HEK293T (cell line): ENCODE measurements at regions of chr11 and their contacts with region 1.

Region 1: DNA sequence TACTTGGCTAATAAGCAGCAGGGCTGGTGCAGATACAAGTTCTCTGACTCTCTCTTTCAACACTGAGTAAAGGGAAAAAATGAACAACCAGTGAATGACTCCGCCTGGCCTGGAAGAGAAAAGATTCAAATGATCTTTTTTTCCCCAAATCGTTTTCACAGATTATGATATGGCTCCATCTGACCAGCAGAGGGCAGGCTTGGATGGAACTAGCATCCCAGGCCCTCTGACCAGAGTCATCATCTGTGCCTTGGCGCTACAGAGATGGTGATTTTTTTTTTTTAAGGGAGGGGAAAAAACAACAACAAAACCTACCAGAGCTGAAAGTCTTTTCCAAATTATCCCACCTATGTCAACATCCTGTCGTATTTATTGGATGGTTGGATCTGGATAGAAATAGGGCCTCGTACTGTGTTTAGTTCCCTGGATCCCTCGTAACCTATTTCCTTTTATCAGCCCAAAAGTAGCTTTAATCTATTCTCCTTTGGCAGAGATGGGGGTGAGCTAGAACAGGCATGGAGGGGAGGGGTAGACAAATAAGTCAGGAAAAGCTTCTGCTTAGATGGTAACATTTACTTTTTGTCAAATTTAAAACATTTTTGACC is 69.7 kb downstream of the PRSS23 start:
- DNase-seq: peak; percentile 79

Region 2: DNA sequence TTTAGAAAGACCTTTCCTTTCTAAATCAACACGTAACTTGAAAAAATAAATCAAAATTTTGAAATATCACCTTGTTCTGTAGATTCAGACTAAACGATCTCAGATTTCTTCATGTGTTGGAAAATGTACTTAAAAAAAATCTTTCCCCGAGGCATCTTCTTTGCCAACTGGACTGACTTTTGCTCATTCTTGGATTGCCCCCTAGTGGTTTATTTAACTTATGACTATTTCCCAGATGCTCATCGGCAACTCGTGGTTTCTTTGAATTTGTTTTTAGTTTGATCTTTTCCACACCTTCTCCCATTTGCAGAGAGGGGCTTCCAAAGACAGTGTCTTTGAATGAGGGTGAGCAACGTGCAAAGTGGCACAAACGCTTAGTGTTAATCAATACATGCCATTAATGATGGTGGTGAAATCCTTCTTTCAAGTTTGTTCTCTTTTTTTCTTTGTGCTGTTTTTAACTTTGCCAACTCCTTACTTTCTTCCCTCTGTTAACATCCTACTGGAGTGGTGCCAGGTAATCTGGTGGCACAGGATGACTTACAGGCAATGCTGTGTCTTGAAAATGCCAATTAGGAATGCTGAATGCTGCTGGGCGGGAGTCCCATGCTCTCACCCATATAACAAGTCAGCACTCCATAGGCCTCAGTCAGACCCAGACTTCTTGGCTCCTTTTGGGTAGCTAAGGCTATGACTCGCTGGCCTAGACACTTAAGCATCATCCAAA is 51.4 kb before region 1 on chr11:
- CTCF ChIA-PET with region 1: no interaction called
- POLR2A ChIA-PET with region 1: no interaction called
- DNase-seq: peak; percentile 62

Region 3: DNA sequence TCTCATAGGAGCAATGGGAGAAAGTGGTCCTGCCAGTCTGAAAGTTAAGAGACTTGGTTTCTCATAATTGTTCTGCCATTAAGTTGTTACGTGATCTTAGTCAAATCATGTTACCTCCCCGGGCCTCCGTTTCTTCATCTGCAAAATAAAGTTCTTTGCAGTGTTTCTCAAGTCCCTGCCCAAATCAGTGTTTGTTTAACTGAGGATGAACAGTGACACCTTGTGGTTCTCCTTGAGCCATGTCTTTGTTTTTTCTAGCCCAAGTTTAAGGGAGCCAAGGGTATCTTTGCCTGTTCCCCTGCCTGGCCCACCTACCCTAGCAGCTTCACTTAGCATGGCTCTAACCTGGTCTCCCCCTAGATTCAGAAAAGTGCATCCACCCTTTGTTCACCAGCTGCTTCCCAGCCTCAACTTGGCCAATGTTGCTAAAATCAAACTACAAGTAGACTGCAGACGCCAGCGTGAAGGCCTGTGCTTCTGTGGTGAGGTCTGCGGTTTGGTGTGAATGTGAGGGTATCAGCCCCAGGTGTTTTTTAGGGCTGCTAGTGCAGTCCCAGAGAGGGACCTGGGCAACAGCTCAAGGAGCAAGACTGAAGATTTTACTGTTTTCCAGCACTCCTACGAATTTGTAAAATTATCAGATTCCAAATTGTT is 49.6 kb after region 1 on chr11:
- CTCF ChIA-PET with region 1: interaction called, 21 read pairs
- POLR2A ChIA-PET with region 1: no interaction called
- DNase-seq: peak; percentile 66